Colonic mucosa (tissue), 4 donors: ENCODE measurements at regions of chr4 and their contacts with region 1.

Region 1: GRCh38 chr4:498328-498904 is 540 bp downstream of the ZNF721 start:
- DNase-seq: no peak
- H3K4me3 ChIP-seq: peak overlapping the region; percentile 95
- H3K27ac ChIP-seq: peak overlapping the region; percentile 65
- H3K4me1 ChIP-seq: peaks cover 9% of the 10 kb centered on the region
- H3K27me3 ChIP-seq: no peaks in the 10 kb centered on the region
- CTCF ChIP-seq: no peak

Region 2: GRCh38 chr4:337143-337931 is 161.1 kb before region 1 on chr4 and contains the start of gene ZNF141:
- intact Hi-C with region 1: loop called (anchors 10 kb)
- DNase-seq: peak; percentile 98
- H3K4me3 ChIP-seq: peak within 1 kb of the TSS; percentile 98
- H3K27ac ChIP-seq: peak within 1 kb of the TSS; percentile 84
- H3K4me1 ChIP-seq: no peaks in the 10 kb centered on the region
- H3K27me3 ChIP-seq: no peaks in the 10 kb centered on the region
- CTCF ChIP-seq: no peak
- total RNA-seq, gene ZNF141: 16.7 to 17.4 TPM